Psoas muscle (tissue), 8 donors: ENCODE measurements at regions of chr6 and their contacts with region 1.

Region 1: DNA sequence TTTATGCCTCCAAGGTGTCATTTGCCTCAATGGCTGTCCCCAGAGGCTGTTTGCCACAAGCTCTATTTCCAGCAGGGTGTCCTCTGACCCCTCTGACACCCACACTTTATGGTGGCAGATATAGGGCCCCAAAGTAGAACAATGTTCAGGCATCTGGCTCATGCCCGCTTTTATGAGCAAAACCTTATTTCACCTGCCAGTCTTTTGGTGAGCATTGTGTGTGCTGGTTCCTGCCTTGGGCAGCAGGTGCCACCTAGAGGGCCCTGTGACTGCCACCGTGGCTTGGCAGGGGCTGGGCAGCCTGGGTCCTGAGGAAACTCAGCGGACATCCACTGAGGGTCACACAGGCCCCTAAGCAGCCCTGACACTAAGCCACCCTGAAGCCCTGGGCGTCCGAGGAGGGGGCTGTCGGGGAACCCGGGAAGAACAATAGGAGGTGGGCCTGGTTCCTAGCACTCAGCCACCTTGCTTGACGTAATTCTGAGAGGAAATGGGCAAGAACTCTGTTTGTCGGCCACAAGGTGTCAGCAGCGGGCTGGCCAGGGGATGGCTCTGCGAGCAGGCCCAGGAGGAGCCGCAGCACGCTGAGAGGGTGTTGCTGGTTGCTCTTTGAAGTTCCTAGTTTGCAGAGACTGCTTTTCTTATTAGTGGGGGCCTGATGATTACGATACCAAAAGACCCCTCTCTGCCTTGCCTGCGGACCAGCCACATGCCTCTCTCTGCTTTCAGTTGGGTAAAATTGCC is 148.9 kb downstream of the SCML4 start:
- DNase-seq: peak; percentile 81 to 94
- ATAC-seq: peak; percentile 85 to 96 (median 88)
- H3K4me3 ChIP-seq: peak overlapping the region; percentile 44
- H3K27ac ChIP-seq: peak overlapping the region; percentile 56
- H3K4me1 ChIP-seq: peaks cover 27% of the 10 kb centered on the region
- H3K27me3 ChIP-seq: no peaks in the 10 kb centered on the region
- CTCF ChIP-seq: peak; percentile 91

Region 2: DNA sequence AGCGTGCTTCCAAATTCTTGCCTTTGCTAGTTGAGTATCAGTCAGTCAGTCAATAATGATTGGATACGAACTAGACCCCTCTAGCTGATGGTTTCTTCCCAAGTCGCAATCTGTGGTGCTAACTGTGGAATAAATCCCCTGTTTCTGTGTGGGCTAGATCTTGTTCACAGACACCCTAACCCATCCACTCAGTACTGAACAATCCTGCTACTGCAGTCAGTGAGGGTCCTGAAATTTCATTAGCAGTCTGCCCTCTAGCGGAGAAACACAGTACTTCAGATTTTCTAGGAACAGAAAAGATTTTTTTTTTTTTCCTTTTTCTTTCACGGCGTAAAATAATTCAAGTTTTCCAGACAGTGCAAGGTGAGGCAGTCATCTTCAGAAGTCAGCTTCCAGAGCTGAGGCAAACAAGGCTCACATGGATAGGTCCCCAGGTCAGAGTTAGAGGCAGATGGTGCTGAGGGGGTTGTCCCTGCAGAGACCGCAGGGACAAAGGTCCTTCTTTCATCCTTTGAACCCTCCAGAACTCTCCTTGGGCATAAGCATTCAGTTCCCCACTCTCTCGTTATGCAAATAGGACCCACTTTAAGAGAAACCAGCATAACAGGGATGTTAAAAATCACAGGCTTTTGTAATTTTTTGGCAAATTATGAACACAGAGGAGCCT is 29.3 kb after region 1 on chr6:
- intact Hi-C with region 1: loop called in 1 of 2 experiments (anchors 2 kb)
- DNase-seq: no peak
- ATAC-seq: peak; percentile 47 to 74 (median 60)
- H3K4me3 ChIP-seq: no peak overlapping the region
- H3K27ac ChIP-seq: no peak overlapping the region
- H3K4me1 ChIP-seq: no peaks in the 10 kb centered on the region
- H3K27me3 ChIP-seq: no peaks in the 10 kb centered on the region
- CTCF ChIP-seq: peak; percentile 89